ENCODE measurements at regions of chr19 and their contacts with region 1.

Region 1: GRCh38 chr19:494161-495080 is 1.9 kb upstream of the MADCAM1 start:
- DNase-seq: no peak
- H3K4me3 ChIP-seq: no peak overlapping the region
- H3K27ac ChIP-seq: no peak overlapping the region
- H3K4me1 ChIP-seq: peaks cover 0 to 3% of the 10 kb centered on the region in 2 donors
- H3K27me3 ChIP-seq: peaks cover 12 to 28% of the 10 kb centered on the region in 2 donors
- CTCF ChIP-seq: no peak
- POLR2A ChIP-seq: no peak

Region 2: GRCh38 chr19:408898-409515 is 85.4 kb before region 1 on chr19 and contains the start of gene C2CD4C:
- intact Hi-C with region 1: loop called (anchors 1 kb)
- DNase-seq: peak in 1 of 2 donors; percentile 48
- H3K4me3 ChIP-seq: peak within 1 kb of the TSS; percentile 41 to 70 (median 49)
- H3K27ac ChIP-seq: no peak within 1 kb of the TSS
- H3K4me1 ChIP-seq: peaks cover 0 to 6% of the 10 kb centered on the region in 2 donors
- H3K27me3 ChIP-seq: peaks cover 12 to 68% of the 10 kb centered on the region in 2 donors
- CTCF ChIP-seq: no peak
- POLR2A ChIP-seq: no peak
- total RNA-seq, gene C2CD4C: 0.29 to 2.6 (median 0.80) TPM

Region 3: GRCh38 chr19:531009-531752 is 36.8 kb after region 1 on chr19:
- intact Hi-C with region 1: no loop called
- DNase-seq: peak; percentile 79
- H3K4me3 ChIP-seq: peak overlapping the region; percentile 94 to 98 (median 98)
- H3K27ac ChIP-seq: peak overlapping the region; percentile 93 to 99
- H3K4me1 ChIP-seq: peaks cover 8 to 20% of the 10 kb centered on the region in 2 donors
- H3K27me3 ChIP-seq: peaks cover 0 to 6% of the 10 kb centered on the region in 2 donors
- CTCF ChIP-seq: no peak
- POLR2A ChIP-seq: no peak